ENCODE measurements at regions of chr10 and their contacts with region 1.

Region 1: DNA sequence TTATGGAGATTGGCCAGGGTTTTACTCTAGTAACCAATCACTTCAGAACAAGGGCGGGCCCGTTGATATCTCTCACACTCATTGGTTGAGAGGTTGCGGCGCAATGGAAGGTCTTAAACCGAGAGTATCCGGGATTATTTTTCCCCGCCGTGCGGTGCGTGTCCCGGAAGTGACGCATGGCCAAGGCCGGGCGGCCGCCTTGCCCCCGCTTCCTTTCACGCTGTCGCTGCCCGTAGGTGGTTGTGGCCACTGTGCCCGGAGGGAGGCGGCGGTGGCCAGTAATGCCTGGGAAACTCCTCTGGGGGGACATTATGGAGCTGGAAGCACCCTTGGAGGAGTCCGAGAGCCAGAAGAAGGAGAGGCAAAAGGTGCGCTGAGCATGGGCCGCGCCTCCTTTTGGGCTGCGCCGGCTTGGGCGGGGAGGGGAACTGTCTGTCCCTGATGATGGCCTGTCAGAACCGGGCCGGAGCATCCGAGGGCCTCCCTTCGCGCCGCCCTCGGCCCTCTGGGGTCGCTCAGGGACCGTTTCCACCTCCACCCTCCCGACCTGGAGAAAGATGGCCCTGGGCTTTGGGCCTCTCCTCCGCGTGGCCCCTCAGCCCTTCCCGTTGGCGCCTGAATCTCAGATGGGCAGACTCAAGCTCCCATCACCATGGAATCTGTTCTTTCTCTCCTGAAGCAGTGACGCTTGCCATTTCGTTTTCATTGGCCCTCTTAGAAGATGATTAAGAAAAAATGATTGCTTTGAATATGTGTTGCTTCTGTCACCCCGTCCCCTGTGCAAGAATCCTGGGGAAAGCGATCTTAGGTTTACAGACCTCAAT is at the start of gene DDX50:
- DNase-seq: peak; percentile 98
- H3K4me3 Mint-ChIP-seq: peak within 1 kb of the TSS; percentile 95
- H3K27ac Mint-ChIP-seq: peak within 1 kb of the TSS; percentile 97
- H3K4me1 Mint-ChIP-seq: peaks cover 46% of the 10 kb centered on the region
- H3K27me3 Mint-ChIP-seq: no peaks in the 10 kb centered on the region
- total RNA-seq, gene DDX50: 68.8 to 71.9 TPM

Region 2: DNA sequence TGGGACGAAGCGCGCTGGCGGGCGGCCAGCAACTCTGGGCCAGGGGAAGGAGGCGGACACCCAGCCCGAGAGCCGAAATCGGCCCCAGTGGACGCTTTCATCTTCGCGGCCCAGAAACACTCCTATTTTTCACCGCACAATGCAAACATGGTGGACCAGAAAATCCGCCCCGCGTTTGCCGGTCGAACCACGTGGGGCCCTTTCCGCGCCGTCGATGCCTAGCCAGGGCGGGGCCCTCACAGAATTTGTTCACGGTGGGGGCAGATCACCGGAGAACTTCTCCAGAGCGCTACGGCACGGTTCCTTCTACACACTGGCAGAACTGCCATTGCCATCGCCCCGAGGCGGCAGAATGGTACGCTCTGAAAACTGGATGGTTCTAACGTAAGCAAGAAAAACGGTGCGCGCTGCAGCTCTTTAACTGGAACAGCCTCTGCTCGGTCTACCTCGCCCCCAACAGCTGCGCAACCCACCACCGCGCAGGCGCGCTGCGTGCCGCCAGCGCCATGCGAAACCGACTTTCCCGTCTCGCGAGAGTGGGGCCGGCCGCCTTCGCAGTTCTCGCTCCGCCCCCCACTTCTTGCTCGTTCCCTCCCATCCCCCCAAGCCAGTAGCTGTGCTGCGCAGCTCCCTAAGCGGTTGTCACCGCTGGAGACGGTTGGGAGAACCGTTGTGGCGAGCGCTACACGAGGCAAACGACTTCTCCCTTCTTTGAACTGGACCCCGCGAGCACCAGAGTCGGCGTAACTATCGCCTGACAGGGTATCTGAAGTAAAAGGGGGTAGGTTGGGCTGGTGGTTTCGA is 569.7 kb before region 1 on chr10 and contains the start of gene HNRNPH3:
- CTCF ChIA-PET with region 1: no interaction called
- POLR2A ChIA-PET with region 1: interaction called, 11 read pairs
- intact Hi-C with region 1: loop called (anchors 1 kb)
- DNase-seq: peak; percentile 99
- H3K4me3 Mint-ChIP-seq: peak within 1 kb of the TSS; percentile 100
- H3K27ac Mint-ChIP-seq: peak within 1 kb of the TSS; percentile 100
- H3K4me1 Mint-ChIP-seq: peaks cover 34% of the 10 kb centered on the region
- H3K27me3 Mint-ChIP-seq: peaks cover 3% of the 10 kb centered on the region
- total RNA-seq, gene HNRNPH3: 140 to 144 TPM

Region 3: DNA sequence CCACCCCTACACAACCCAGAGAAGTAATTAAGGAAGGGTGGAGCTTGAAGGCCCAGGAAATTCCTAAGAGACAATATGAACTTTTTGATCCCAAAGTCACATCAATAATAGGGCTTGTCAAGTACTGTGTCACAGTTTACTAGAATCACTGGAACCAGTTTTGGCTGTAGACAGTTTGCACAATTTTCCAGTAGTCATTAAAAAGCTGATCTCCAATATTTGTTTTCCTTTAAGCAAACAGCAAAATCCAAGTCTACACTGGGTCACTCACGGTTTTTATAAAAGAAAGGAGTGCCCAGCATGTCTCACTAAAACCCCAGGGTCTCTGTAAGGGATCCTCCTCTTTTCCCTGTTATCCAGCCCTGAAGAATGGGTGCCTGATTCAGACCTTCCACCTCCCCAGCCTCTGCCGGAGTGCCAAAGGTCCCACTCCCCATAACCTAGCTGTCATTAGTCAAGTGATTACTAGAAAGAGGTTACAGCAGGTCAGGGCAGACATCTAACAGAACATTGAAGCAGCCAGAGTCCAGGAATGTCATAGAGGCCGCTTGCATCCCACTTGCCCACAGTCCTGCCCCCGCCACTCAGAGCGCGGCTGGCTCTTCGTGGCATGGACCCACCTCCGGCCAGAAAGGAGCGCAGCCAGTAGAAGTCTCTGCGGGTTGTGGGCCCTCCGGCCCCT is 374.5 kb before region 1 on chr10:
- CTCF ChIA-PET with region 1: no interaction called
- POLR2A ChIA-PET with region 1: no interaction called
- intact Hi-C with region 1: loop called (anchors 1 kb)
- DNase-seq: no peak
- H3K4me3 Mint-ChIP-seq: peak overlapping the region; percentile 90
- H3K27ac Mint-ChIP-seq: peak overlapping the region; percentile 77
- H3K4me1 Mint-ChIP-seq: peaks cover 9% of the 10 kb centered on the region
- H3K27me3 Mint-ChIP-seq: no peaks in the 10 kb centered on the region

Region 4: GRCh38 chr10:68720793-68721672 is 180.3 kb before region 1 on chr10 and contains the start of gene CCAR1:
- CTCF ChIA-PET with region 1: no interaction called
- POLR2A ChIA-PET with region 1: no interaction called
- intact Hi-C with region 1: loop called (anchors 1 kb)
- DNase-seq: peak; percentile 98
- H3K4me3 Mint-ChIP-seq: peak within 1 kb of the TSS; percentile 96
- H3K27ac Mint-ChIP-seq: peak within 1 kb of the TSS; percentile 96
- H3K4me1 Mint-ChIP-seq: peaks cover 10% of the 10 kb centered on the region
- H3K27me3 Mint-ChIP-seq: peaks cover 1% of the 10 kb centered on the region
- total RNA-seq, gene CCAR1: 72.7 to 74.4 TPM

Region 5: GRCh38 chr10:68826764-68827591 is 74.3 kb before region 1 on chr10 and contains the start of gene STOX1:
- CTCF ChIA-PET with region 1: interaction called, 9 read pairs
- POLR2A ChIA-PET with region 1: interaction called, 7 read pairs
- intact Hi-C with region 1: loop called (anchors 1 kb)
- DNase-seq: peak; percentile 70
- H3K4me3 Mint-ChIP-seq: peak within 1 kb of the TSS; percentile 67
- H3K27ac Mint-ChIP-seq: no peak within 1 kb of the TSS
- H3K4me1 Mint-ChIP-seq: peaks cover 4% of the 10 kb centered on the region
- H3K27me3 Mint-ChIP-seq: peaks cover 5% of the 10 kb centered on the region
- total RNA-seq, gene STOX1: 0.29 to 0.36 TPM

Region 6: DNA sequence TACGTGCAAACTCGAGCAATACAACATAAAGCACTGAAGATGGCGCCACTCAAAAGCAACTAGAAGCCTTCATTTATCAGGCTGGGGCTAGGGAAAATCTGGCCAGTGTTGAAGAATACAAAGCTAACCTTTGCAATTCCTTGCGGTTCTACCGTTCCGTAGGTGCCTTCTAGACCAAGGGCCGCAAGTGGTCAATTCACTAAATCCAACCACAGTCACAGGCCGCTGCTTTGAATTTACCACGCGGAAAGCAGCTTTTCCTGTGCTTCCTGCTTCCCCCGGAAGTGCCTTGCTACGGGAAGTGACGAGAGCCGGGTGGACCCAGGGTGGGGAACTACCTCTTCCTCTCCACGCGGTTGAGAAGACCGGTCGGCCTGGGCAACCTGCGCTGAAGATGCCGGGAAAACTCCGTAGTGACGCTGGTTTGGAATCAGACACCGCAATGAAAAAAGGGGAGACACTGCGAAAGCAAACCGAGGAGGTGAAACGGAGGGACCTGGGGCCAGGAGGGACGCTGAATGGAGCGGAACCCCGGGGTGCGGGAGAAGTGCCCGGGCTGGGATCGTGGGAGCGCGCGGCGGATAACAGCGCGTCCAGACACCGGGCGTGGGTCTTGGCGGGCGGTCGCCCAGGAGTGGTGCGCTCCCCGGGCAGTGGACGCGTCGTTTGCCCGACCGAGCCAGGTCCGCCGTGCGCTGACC is 54.7 kb after region 1 on chr10 and contains the start of gene DDX21:
- CTCF ChIA-PET with region 1: interaction called, 13 read pairs
- POLR2A ChIA-PET with region 1: interaction called, 15 read pairs
- intact Hi-C with region 1: loop called (anchors 1 kb)
- DNase-seq: peak; percentile 94
- H3K4me3 Mint-ChIP-seq: peak within 1 kb of the TSS; percentile 97
- H3K27ac Mint-ChIP-seq: peak within 1 kb of the TSS; percentile 99
- H3K4me1 Mint-ChIP-seq: peaks cover 39% of the 10 kb centered on the region
- H3K27me3 Mint-ChIP-seq: no peaks in the 10 kb centered on the region
- total RNA-seq, gene DDX21: 156 to 158 TPM